Activated CD4-positive, alpha-beta T cell treated with anti-CD3 and anti-CD28 coated beads, Interleukin-2, amount 10 ng/mL, durations not matched to agents 24 days and 14 days (primary cell): ENCODE measurements at regions of chr9 and their contacts with region 1.

Region 1: GRCh38 chr9:15422372-15423230 is at the start of gene SNAPC3:
- DNase-seq: peak; percentile 98
- H3K4me3 Mint-ChIP-seq: peak within 1 kb of the TSS; percentile 97
- H3K27ac Mint-ChIP-seq: peak within 1 kb of the TSS; percentile 91
- H3K4me1 Mint-ChIP-seq: peaks cover 43% of the 10 kb centered on the region
- H3K27me3 Mint-ChIP-seq: peaks cover 5% of the 10 kb centered on the region
- total RNA-seq, gene SNAPC3: 31.7 and 35.9 TPM in 2 replicates

Region 2: GRCh38 chr9:15104826-15105420 is 317.7 kb before region 1 on chr9:
- intact Hi-C with region 1: loop called (anchors 10 kb)
- DNase-seq: peak; percentile 84
- H3K4me3 Mint-ChIP-seq: no peak overlapping the region
- H3K27ac Mint-ChIP-seq: no peak overlapping the region
- H3K4me1 Mint-ChIP-seq: no peaks in the 10 kb centered on the region
- H3K27me3 Mint-ChIP-seq: peaks cover 11% of the 10 kb centered on the region

Region 3: GRCh38 chr9:15231788-15232635 is 190.6 kb before region 1 on chr9:
- intact Hi-C with region 1: loop called (anchors 5 kb)
- DNase-seq: no peak
- H3K4me3 Mint-ChIP-seq: no peak overlapping the region
- H3K27ac Mint-ChIP-seq: no peak overlapping the region
- H3K4me1 Mint-ChIP-seq: peaks cover 27% of the 10 kb centered on the region
- H3K27me3 Mint-ChIP-seq: no peaks in the 10 kb centered on the region

Region 4: DNA sequence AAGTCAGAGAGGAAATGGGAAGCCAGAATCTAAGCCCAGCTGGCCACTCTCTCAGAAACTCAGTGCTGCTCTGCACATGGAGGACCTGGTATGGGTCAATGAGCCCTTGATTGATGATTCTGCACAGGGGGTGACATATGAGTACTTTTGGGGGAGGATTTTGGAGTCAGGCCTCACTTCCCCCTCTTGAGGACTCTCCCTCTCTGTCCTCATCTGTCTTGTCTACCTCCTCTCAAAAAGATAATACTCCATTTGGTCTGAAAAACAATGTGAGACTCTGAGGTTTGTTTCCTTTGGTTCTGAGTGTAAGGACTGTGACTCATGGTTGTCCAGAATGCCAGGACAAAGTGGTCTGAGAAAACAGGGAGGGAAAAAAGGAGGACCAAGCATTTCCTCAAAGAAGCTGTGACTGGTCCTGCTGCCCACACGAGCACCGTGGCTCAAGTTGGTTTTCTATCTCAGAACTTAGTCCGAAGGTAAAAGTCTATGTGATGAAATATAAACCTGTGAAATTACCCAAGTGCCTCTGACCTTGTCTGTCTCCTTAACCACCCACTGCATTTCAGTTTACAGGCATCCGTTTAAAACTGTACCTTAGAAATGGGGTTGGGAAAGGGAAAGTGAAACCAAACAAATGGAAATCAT is 126.7 kb before region 1 on chr9:
- intact Hi-C with region 1: loop called (anchors 1 kb)
- DNase-seq: peak; percentile 81
- H3K4me3 Mint-ChIP-seq: peak overlapping the region; percentile 72
- H3K27ac Mint-ChIP-seq: peak overlapping the region; percentile 97
- H3K4me1 Mint-ChIP-seq: peaks cover 82% of the 10 kb centered on the region
- H3K27me3 Mint-ChIP-seq: no peaks in the 10 kb centered on the region

Region 5: GRCh38 chr9:15357050-15357653 is 65.4 kb before region 1 on chr9:
- intact Hi-C with region 1: loop called (anchors 2 kb)
- DNase-seq: peak; percentile 81
- H3K4me3 Mint-ChIP-seq: no peak overlapping the region
- H3K27ac Mint-ChIP-seq: no peak overlapping the region
- H3K4me1 Mint-ChIP-seq: peaks cover 10% of the 10 kb centered on the region
- H3K27me3 Mint-ChIP-seq: peaks cover 2% of the 10 kb centered on the region

Region 6: GRCh38 chr9:15510789-15511575 is 88.4 kb after region 1 on chr9 and contains the start of gene PSIP1:
- intact Hi-C with region 1: loop called (anchors 1 kb)
- DNase-seq: peak; percentile 96
- H3K4me3 Mint-ChIP-seq: peak within 1 kb of the TSS; percentile 87
- H3K27ac Mint-ChIP-seq: peak within 1 kb of the TSS; percentile 100
- H3K4me1 Mint-ChIP-seq: peaks cover 41% of the 10 kb centered on the region
- H3K27me3 Mint-ChIP-seq: peaks cover 3% of the 10 kb centered on the region
- total RNA-seq, gene PSIP1: 106 TPM in 2 replicates

Region 7: DNA sequence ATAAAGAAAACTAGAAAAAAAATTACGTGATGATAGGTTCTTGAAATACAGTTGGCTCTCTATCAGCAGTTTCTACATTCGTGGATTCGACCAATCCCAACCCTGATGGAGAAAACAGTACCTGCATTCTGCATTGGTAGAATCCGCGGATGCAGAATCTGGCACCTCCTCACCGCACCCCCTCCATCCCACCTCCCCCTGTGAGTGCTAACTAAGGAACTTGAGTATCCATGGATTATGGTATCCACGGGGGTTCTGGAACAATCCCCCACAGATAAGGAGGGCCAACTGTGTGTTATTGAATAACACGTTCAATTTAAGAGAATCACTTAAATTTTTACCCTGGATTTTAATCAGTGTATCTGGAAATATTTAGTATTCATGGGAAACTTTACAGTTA is 98.7 kb after region 1 on chr9:
- intact Hi-C with region 1: no loop called
- DNase-seq: no peak
- H3K4me3 Mint-ChIP-seq: no peak overlapping the region
- H3K27ac Mint-ChIP-seq: no peak overlapping the region
- H3K4me1 Mint-ChIP-seq: no peaks in the 10 kb centered on the region
- H3K27me3 Mint-ChIP-seq: peaks cover 15% of the 10 kb centered on the region

Region 8: DNA sequence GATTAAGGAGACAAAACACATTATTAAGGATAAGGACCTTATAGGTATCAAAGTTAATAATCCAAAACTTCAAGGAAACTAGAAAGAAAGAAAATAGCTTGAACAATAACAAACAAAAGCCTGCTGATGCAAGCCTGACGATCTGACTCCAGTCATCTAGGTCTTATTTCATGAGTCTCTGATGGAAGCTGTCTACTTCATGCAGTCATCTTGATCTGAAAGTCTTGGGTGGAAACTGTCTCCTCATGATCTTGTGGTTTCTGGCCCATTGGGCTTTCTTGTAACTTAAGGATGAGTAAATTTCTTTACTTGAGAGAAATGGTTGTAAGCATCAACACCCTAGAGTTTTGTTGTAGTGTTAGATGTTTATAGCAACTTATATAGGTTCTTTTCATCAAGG is 108.8 kb after region 1 on chr9:
- intact Hi-C with region 1: no loop called
- DNase-seq: no peak
- H3K4me3 Mint-ChIP-seq: no peak overlapping the region
- H3K27ac Mint-ChIP-seq: no peak overlapping the region
- H3K4me1 Mint-ChIP-seq: peaks cover 4% of the 10 kb centered on the region
- H3K27me3 Mint-ChIP-seq: no peaks in the 10 kb centered on the region

Region 9: DNA sequence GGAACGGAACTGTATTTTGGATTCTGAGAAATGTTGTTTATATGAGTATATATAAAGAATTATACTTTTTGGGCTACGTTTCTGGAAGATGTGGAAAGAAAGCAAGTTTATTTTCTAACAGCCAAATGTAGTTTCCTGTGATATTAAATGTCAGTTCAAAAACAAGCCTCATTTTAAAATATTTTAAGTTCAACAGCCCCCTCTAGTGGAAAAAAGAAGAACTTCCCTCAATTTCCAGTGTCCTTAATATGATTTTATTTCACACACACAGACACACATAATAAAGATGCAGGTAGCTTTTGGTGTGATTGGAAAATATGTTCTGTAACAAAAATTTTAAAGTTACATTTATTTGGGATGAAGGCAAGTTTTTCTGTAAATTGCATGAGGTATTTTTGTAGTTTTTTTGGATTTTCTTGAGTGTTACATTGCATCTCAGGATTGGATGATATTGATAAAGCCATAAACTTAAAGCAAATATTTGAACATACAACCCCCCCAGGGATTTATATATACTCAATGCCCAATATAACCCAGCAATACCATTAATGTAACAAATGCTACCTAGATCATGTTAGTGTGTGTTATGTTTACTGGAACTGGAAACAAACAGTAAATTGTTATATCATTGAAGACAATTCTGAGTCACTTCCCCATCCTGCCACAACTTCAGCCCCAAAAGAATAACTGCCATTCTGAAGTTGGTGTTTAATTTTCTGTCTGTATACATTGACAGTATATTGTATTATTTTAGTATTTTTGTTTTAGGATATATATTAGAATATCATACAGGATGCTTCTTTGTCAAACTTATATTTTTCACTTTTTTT is 184.3 kb after region 1 on chr9:
- intact Hi-C with region 1: loop called (anchors 5 kb)
- DNase-seq: peak; percentile 78
- H3K4me3 Mint-ChIP-seq: no peak overlapping the region
- H3K27ac Mint-ChIP-seq: no peak overlapping the region
- H3K4me1 Mint-ChIP-seq: peaks cover 5% of the 10 kb centered on the region
- H3K27me3 Mint-ChIP-seq: no peaks in the 10 kb centered on the region